ENCODE measurements at regions of chr17 and their contacts with region 1.

Region 1: DNA sequence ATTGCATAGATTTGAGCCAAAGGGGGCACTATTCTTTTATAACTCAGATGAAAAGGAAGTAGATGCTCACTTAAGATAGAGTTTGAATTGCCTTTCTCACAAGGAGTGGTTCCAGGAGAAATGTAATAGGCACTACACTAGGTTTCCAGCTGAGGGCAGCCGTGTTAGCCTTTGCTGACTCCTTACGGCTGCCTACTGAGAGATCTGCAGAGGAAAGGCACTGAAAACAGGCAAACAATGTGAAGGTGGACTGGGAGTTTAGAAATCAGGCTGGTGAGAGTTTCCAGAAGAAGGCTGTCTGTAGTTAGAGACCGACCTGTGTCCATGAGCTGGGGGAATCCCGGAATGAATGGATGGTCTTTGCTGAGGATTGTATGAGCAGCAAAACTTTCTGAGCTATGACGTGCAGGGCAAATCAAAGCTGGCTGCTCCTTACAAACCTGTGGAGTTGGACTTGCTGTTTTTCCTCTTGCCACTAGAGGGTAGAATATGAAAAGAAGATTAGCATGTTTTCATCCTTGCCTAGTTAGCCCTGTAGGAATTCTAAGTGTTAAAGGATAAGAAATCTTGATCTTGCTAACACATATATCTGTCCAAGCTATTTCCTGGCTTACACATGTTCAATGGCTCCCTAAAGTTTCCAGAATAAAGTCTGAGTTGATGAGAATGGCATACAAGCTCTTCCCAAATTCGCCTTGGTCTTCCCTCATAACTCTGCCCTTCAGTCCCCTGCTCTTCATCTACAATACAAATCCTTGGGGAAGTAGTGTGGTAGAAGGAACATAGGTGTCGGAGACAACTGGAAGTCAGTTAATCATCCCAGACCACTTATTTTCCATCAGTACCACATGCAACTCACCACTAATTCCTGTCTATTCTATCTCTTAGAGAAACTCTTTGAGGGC is 20.1 kb upstream of the TAOK1 start:
- DNase-seq: peak in 1 of 2 experiments; percentile 78
- H3K4me3 ChIP-seq: peak overlapping the region in 2 of 4 experiments; percentile 13 to 48; a peak in 3 of 8 replicates
- H3K27ac ChIP-seq: no peak overlapping the region
- H3K4me1 ChIP-seq: peaks cover 2 to 7% (median 3%) of the 10 kb centered on the region in 4 experiments; a peak in 5 of 7 replicates
- H3K27me3 ChIP-seq: no peaks in the 10 kb centered on the region
- CTCF ChIP-seq: peak; percentile 34 to 75 (median 59)
- EP300 ChIP-seq: no peak
- POLR2A ChIP-seq: peak in 1 of 2 experiments; percentile 38; a peak in 1 of 3 replicates
- RAD21 ChIP-seq: peak; percentile 70 to 79

Region 2: GRCh38 chr17:29293890-29294579 is 76.0 kb before region 1 on chr17 and contains the start of gene NUFIP2:
- CTCF ChIA-PET with region 1: interaction called, 3 read pairs
- POLR2A ChIA-PET with region 1: interaction called, 10 read pairs
- DNase-seq: peak; percentile 96 to 100
- H3K4me3 ChIP-seq: peak within 1 kb of the TSS; percentile 90 to 99 (median 96)
- H3K27ac ChIP-seq: peak within 1 kb of the TSS; percentile 89
- H3K4me1 ChIP-seq: peaks cover 0 to 2% (median 0%) of the 10 kb centered on the region in 4 experiments; a peak in 1 of 7 replicates
- H3K27me3 ChIP-seq: no peaks in the 10 kb centered on the region; a peak in 1 of 7 replicates
- CTCF ChIP-seq: no peak
- EP300 ChIP-seq: peak in 1 of 2 experiments; percentile 70; a peak in 1 of 3 replicates
- POLR2A ChIP-seq: peak; percentile 99 to 100
- RAD21 ChIP-seq: no peak
- total RNA-seq, gene NUFIP2: 118 TPM in 2 replicates

Region 3: DNA sequence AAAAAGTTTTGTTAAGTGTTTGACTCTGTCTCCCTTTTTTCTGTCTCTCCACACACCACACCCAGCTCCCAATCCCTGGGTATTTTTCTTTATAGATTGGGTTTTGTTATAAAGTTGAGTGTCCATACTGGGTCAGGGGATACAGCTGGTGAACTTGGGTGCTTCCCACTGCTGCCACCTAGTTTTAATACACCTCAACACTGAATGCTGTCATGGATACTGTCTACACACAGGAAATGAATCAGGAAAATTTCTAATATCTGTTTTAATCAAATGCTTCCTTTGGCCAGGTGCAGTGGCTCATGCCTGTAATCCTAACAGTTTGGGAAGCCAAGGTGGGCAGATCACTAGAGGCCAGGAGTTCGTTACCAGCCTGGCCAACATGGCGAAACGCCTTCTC is 14.8 kb after region 1 on chr17:
- CTCF ChIA-PET with region 1: interaction called, 79 read pairs
- POLR2A ChIA-PET with region 1: interaction called, 6 read pairs
- DNase-seq: no peak
- H3K4me3 ChIP-seq: no peak overlapping the region
- H3K27ac ChIP-seq: no peak overlapping the region
- H3K4me1 ChIP-seq: no peaks in the 10 kb centered on the region; a peak in 1 of 7 replicates
- H3K27me3 ChIP-seq: no peaks in the 10 kb centered on the region
- CTCF ChIP-seq: no peak
- EP300 ChIP-seq: no peak
- POLR2A ChIP-seq: no peak
- RAD21 ChIP-seq: no peak

Region 4: GRCh38 chr17:29430275-29430674 is 60.2 kb after region 1 on chr17:
- CTCF ChIA-PET with region 1: no interaction called
- POLR2A ChIA-PET with region 1: no interaction called
- DNase-seq: no peak
- H3K4me3 ChIP-seq: no peak overlapping the region
- H3K27ac ChIP-seq: no peak overlapping the region
- H3K4me1 ChIP-seq: peaks cover 0 to 4% (median 0%) of the 10 kb centered on the region in 4 experiments; a peak in 3 of 7 replicates
- H3K27me3 ChIP-seq: no peaks in the 10 kb centered on the region
- CTCF ChIP-seq: no peak
- EP300 ChIP-seq: no peak
- POLR2A ChIP-seq: no peak
- RAD21 ChIP-seq: no peak

Region 5: GRCh38 chr17:29495011-29495410 is 124.9 kb after region 1 on chr17:
- CTCF ChIA-PET with region 1: interaction called, 13 read pairs
- POLR2A ChIA-PET with region 1: no interaction called
- DNase-seq: no peak
- H3K4me3 ChIP-seq: no peak overlapping the region
- H3K27ac ChIP-seq: no peak overlapping the region
- H3K4me1 ChIP-seq: no peaks in the 10 kb centered on the region
- H3K27me3 ChIP-seq: no peaks in the 10 kb centered on the region
- CTCF ChIP-seq: no peak
- EP300 ChIP-seq: no peak
- POLR2A ChIP-seq: no peak
- RAD21 ChIP-seq: no peak

Region 6: DNA sequence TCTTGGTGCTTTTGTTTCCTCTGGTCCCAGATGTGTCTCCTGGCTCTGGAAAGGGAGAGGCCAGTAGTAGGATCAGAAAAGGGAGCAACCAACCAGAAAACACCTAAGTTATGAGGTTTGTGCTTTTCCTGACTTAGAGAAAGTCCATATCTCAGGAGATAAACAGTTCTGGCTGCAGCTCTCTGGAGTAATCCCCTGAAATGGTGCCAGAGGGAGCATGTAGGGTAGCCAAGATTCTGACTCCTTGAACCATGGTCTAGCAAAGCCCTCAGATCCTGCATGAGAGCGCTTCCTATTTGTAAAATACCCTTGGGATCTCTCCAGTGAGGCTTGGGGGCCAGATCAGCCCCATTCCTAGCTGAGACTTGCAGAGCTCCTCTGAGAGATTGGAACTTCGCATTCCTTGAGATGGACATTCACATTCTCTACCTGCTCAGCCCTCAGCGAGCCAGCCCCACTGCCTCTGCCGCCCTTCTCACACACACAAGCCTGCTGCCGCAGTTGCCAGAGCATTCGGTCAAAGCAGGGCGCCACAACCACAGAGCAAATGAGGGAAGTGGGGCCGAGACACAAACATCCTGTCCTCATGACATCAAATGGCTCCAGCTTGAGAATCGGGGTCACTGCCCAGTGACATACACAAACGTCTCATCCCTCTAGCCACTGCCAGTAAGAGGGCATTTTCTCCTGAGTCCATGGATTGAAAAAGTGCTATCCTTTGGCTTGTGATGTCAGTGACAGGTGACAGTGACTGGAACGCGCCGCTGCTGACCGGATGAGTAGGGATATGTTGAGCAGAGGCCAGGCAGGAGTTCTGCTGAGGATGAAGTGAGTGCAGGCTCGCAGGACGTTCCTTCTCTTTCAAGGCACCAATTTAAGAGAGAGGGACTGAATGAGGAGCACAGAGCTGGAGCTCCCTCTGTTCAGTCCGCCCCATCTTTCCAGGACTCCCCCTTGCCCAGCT is 191.8 kb after region 1 on chr17:
- CTCF ChIA-PET with region 1: interaction called, 13 read pairs
- POLR2A ChIA-PET with region 1: no interaction called
- DNase-seq: no peak
- H3K4me3 ChIP-seq: no peak overlapping the region
- H3K27ac ChIP-seq: no peak overlapping the region
- H3K4me1 ChIP-seq: peaks cover 0 to 7% (median 6%) of the 10 kb centered on the region in 4 experiments; a peak in 4 of 7 replicates
- H3K27me3 ChIP-seq: peaks cover 11 to 28% (median 23%) of the 10 kb centered on the region in 4 experiments
- CTCF ChIP-seq: no peak
- EP300 ChIP-seq: no peak
- POLR2A ChIP-seq: no peak
- RAD21 ChIP-seq: no peak

Region 7: DNA sequence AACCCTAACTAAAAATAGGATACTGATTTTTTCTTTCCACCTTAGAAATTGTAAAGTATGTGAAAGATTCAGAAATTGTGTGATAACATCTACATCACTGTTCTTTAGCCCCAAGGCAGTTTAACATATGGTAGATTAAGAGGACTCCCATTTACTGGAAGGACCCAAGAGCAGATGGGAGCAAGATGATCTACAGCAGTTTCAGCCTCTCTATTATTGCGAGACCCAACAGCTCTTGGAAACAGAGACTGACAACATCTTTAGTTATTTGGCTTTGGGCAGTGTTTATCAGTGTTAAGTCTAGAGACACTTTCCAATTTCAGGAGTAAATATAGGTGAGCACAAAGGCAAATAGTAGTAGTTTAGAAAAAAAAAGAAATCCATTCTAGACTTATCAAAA is 377.6 kb after region 1 on chr17:
- CTCF ChIA-PET with region 1: no interaction called
- POLR2A ChIA-PET with region 1: no interaction called
- DNase-seq: no peak
- H3K4me3 ChIP-seq: no peak overlapping the region
- H3K27ac ChIP-seq: no peak overlapping the region
- H3K4me1 ChIP-seq: peaks cover 0 to 4% (median 0%) of the 10 kb centered on the region in 4 experiments; a peak in 2 of 7 replicates
- H3K27me3 ChIP-seq: no peaks in the 10 kb centered on the region
- CTCF ChIP-seq: no peak
- EP300 ChIP-seq: no peak
- POLR2A ChIP-seq: no peak
- RAD21 ChIP-seq: no peak

Measured in H1 (cell line).